ENCODE measurements at regions of chr5 and their contacts with region 1.

Region 1: DNA sequence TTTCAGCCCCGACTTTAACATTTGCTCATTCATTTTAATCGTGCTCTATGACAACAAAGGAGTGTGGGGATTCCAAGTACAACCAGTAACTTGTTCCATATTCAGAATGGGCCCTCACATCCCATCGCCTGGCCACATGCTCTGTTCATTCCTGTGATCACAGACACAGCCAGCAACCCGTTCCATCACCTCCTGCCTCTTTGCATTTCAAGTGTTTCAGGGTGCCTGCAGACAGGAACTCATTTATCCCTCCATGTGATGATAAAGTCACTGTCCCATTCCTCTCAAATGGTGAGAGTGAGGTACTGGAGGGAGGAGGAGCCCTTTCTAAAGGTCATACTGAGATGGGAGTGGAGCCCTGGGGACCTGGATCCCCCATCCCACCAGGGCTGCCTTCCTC is 571.1 kb downstream of the MAT2B start:
- DNase-seq: no peak
- ATAC-seq: no peak
- H3K4me3 ChIP-seq: no peak overlapping the region
- H3K27ac ChIP-seq: no peak overlapping the region
- H3K4me1 ChIP-seq: no peaks in the 10 kb centered on the region
- H3K27me3 ChIP-seq: no peaks in the 10 kb centered on the region
- CTCF ChIP-seq: no peak

Region 2: DNA sequence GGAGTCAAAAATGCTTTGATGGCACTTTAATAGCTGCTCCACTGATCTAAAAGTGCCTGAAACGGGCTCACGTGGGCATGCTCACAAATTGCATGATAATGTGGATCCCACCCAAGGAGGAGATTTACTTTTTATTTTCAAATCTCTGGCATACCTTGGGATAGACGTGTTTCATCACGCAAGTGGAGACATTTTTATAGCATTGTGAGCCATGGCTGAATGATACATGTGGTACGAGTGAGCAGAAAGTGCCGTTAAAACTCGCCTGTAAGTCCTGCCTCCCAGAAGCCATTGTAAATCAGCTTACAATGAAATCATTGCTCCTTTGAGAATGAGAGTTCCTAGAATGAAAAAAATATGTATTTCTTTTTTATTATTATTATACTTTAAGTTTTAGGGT is 56.4 kb before region 1 on chr5:
- CTCF ChIA-PET with region 1: no interaction called
- POLR2A ChIA-PET with region 1: no interaction called
- in situ Hi-C with region 1: no loop called
- intact Hi-C with region 1: no loop called
- DNase-seq: no peak
- ATAC-seq: no peak
- H3K4me3 ChIP-seq: no peak overlapping the region
- H3K27ac ChIP-seq: no peak overlapping the region
- H3K4me1 ChIP-seq: no peaks in the 10 kb centered on the region
- H3K27me3 ChIP-seq: no peaks in the 10 kb centered on the region
- CTCF ChIP-seq: no peak

Region 3: DNA sequence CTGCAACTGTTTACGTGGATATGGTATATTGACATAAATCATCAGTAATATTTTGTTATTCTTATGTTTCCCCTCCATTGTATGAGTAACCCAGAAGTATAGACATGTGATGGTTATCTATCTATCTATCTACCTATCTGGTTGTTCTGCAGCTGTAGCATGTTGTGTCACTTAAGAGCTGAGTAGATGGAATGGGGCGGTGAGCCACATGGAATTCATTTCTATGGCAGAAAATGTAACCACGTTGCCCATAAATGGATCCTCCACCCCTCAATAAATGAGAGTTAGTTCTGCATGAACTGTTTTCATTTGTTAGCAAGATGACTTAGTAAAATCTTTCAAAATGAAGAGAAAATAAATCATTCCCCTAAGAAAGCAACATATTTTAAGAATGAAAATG is 17.9 kb before region 1 on chr5:
- CTCF ChIA-PET with region 1: no interaction called
- POLR2A ChIA-PET with region 1: interaction called, 13 read pairs
- in situ Hi-C with region 1: no loop called
- intact Hi-C with region 1: no loop called
- DNase-seq: no peak
- ATAC-seq: no peak
- H3K4me3 ChIP-seq: no peak overlapping the region
- H3K27ac ChIP-seq: no peak overlapping the region
- H3K4me1 ChIP-seq: no peaks in the 10 kb centered on the region
- H3K27me3 ChIP-seq: no peaks in the 10 kb centered on the region
- CTCF ChIP-seq: no peak

Region 4: GRCh38 chr5:164204338-164204946 is 127.9 kb after region 1 on chr5:
- CTCF ChIA-PET with region 1: no interaction called
- POLR2A ChIA-PET with region 1: no interaction called
- in situ Hi-C with region 1: no loop called
- intact Hi-C with region 1: no loop called
- DNase-seq: no peak
- ATAC-seq: no peak
- H3K4me3 ChIP-seq: no peak overlapping the region
- H3K27ac ChIP-seq: no peak overlapping the region
- H3K4me1 ChIP-seq: no peaks in the 10 kb centered on the region
- H3K27me3 ChIP-seq: no peaks in the 10 kb centered on the region
- CTCF ChIP-seq: no peak